SK-N-SH (cell line): ENCODE measurements at regions of chr7 and their contacts with region 1.

Region 1: GRCh38 chr7:28096713-28097112 is 83.9 kb downstream of the JAZF1 start:
- DNase-seq: peak; percentile 84
- H3K4me3 ChIP-seq: no peak overlapping the region
- H3K27ac ChIP-seq: no peak overlapping the region
- H3K4me1 ChIP-seq: no peaks in the 10 kb centered on the region
- H3K27me3 ChIP-seq: no peaks in the 10 kb centered on the region
- CTCF ChIP-seq: peak; percentile 99
- EP300 ChIP-seq: no peak
- RAD21 ChIP-seq: peak; percentile 98

Region 2: DNA sequence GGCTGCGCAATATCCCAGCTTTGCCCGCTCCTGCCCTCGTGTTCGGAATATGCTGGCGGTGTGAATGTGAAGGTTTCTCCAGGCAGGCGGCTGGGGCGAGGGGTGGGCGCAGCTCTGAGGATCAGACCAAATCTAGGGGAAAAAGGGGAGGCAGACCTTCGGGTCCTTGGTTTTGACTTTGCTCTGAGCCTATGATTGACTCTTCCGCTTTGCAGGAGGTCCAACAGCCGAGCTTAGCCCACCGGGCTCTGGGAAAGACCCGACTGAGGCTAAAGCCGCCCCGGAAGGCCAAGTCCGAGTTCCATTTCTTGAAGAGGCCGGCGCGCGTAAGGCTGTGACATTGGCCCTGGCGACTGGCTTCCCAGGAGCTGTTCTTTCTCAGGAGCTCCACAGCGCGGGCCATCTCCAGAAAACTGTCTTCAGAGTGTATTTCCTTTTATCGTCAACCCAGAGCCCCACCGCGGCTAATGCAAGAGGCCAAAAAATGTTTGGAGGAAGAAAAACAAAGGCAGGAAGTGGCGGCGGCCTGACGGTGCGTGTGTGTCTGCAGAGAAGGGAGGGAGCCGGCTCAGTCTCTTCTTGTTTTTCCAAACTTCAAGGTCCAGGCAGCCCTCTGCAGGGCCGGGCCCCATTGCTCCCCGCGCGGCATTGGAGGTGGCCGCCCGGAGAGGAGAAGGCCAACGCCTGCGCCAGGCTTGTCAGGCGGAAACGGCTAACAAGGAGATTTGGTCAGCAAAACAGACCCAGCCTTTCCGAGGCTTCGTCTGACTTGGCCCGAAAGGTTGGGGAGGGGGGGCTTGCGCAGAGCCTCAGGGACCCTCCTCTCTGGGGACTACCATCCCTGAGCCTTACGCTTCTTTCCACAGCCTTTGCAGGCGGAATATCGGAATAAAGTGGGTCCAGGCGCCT is 908.1 kb before region 1 on chr7:
- CTCF ChIA-PET with region 1: interaction called, 10 read pairs
- POLR2A ChIA-PET with region 1: no interaction called
- DNase-seq: no peak
- H3K4me3 ChIP-seq: no peak overlapping the region
- H3K27ac ChIP-seq: no peak overlapping the region
- H3K4me1 ChIP-seq: peaks cover 4 to 10% of the 10 kb centered on the region in 2 experiments; a peak in 1 of 4 replicates
- H3K27me3 ChIP-seq: peaks cover 98% of the 10 kb centered on the region
- CTCF ChIP-seq: no peak
- EP300 ChIP-seq: no peak
- RAD21 ChIP-seq: no peak

Region 3: GRCh38 chr7:27850531-27850930 is 246.2 kb before region 1 on chr7:
- CTCF ChIA-PET with region 1: no interaction called
- POLR2A ChIA-PET with region 1: no interaction called
- DNase-seq: no peak
- H3K4me3 ChIP-seq: no peak overlapping the region
- H3K27ac ChIP-seq: no peak overlapping the region
- H3K4me1 ChIP-seq: no peaks in the 10 kb centered on the region
- H3K27me3 ChIP-seq: no peaks in the 10 kb centered on the region
- CTCF ChIP-seq: no peak
- EP300 ChIP-seq: no peak
- RAD21 ChIP-seq: no peak

Region 4: DNA sequence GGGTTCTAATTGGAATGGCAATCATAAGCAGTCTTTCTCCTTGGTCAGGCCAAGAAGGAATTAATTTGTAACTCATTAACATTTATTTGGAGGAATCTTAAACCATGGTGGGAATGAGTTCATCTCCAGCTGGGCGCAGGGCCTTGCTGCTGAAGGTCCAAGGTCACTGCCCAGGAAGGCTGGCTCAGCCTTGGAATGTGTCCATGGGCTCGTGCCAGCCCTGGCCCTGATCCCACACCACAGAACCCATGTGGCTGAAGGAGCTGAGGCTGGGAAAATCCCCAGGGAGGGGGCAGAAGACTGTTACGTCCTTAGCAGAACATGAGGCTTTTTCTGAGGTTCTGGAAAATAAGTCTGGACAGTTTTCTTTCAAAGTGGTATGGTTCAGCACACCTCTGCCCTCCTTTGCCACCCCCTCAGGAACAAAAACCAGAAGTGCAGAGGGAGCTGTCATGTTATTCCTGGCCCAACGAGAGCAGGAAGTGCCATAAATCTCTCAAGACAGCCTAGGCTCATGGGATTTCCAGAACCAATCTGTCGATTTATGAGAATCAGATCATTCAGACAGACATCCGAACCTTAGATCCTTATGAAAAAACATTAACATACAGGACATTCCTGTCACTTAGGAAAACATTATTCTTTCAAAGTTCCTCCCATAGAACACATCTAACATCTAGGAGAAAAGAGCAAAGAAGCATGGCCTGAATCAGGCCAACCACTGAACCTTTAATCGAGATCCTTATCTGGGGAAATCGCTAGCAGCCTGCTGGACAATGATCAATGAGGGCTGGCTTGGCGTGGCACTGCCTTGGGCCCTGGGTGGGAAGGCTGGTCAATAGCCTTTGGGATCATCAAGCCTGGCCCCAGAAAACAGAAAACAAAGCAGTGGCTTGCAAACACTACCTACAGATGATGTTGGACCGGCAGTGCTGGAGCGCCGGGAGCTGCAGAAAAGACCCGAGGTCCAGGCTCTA is 222.4 kb before region 1 on chr7:
- CTCF ChIA-PET with region 1: no interaction called
- POLR2A ChIA-PET with region 1: no interaction called
- DNase-seq: no peak
- H3K4me3 ChIP-seq: no peak overlapping the region
- H3K27ac ChIP-seq: peak overlapping the region in 1 of 2 experiments; percentile 43; a peak in 2 of 4 replicates
- H3K4me1 ChIP-seq: peaks cover 7 to 10% of the 10 kb centered on the region in 2 experiments
- H3K27me3 ChIP-seq: no peaks in the 10 kb centered on the region
- CTCF ChIP-seq: no peak
- EP300 ChIP-seq: peak in 1 of 2 experiments; percentile 26; a peak in 1 of 4 replicates
- RAD21 ChIP-seq: no peak

Region 5: GRCh38 chr7:28062197-28062991 is 34.3 kb before region 1 on chr7:
- CTCF ChIA-PET with region 1: interaction called, 828 read pairs
- POLR2A ChIA-PET with region 1: interaction called, 5 read pairs
- DNase-seq: peak; percentile 62
- H3K4me3 ChIP-seq: no peak overlapping the region
- H3K27ac ChIP-seq: no peak overlapping the region
- H3K4me1 ChIP-seq: peaks cover 0 to 8% of the 10 kb centered on the region in 2 experiments; a peak in 2 of 4 replicates
- H3K27me3 ChIP-seq: no peaks in the 10 kb centered on the region
- CTCF ChIP-seq: peak; percentile 88
- EP300 ChIP-seq: no peak
- RAD21 ChIP-seq: peak; percentile 92

Region 6: DNA sequence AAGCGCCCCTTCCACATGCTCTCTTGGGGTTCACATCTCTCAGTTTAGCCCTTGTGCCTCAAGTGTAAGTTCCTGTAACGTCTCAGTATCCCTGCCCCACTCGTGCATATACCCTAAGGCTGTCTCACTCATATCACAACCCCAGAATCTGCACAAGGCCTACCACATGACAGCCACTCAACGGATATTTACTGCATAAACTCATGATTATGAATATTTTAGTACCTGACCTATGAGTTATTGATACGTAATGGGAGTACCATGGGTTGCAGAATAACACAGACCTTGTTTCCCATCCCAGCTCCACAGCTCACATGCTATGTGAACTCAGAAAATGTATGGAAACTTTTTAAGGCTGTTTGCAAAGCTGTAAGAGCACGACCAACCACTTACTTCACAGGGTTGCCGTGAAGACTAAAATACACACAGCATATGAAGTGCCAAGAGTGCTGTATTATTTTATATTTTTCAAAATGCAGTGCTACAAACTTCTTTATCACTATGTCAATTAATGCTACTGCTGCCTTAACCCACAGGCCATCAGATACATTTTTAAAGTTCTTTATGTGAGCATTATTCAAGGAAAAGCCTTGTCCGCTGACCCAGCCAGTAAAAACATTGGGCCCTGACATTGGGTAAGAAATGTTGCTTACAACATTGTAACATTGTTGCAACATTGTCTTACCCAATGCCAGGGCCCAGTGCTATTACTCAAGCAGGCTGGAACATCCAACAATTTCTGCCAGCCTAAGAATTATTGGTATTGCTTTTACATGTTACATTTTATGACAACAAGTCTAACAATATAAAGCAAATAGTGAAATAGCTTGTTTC is 13.3 kb before region 1 on chr7:
- CTCF ChIA-PET with region 1: interaction called, 828 read pairs
- POLR2A ChIA-PET with region 1: no interaction called
- DNase-seq: no peak
- H3K4me3 ChIP-seq: no peak overlapping the region
- H3K27ac ChIP-seq: no peak overlapping the region
- H3K4me1 ChIP-seq: peaks cover 0 to 8% of the 10 kb centered on the region in 2 experiments; a peak in 1 of 4 replicates
- H3K27me3 ChIP-seq: no peaks in the 10 kb centered on the region
- CTCF ChIP-seq: no peak
- EP300 ChIP-seq: no peak
- RAD21 ChIP-seq: no peak

Region 7: GRCh38 chr7:28112883-28113540 is 16.3 kb after region 1 on chr7:
- CTCF ChIA-PET with region 1: interaction called, 100 read pairs
- POLR2A ChIA-PET with region 1: no interaction called
- DNase-seq: peak; percentile 34
- H3K4me3 ChIP-seq: no peak overlapping the region
- H3K27ac ChIP-seq: peak overlapping the region in 1 of 2 experiments; percentile 82; a peak in 1 of 4 replicates
- H3K4me1 ChIP-seq: peaks cover 4 to 20% of the 10 kb centered on the region in 2 experiments; a peak in 2 of 4 replicates
- H3K27me3 ChIP-seq: no peaks in the 10 kb centered on the region
- CTCF ChIP-seq: no peak
- EP300 ChIP-seq: no peak
- RAD21 ChIP-seq: no peak

Region 8: DNA sequence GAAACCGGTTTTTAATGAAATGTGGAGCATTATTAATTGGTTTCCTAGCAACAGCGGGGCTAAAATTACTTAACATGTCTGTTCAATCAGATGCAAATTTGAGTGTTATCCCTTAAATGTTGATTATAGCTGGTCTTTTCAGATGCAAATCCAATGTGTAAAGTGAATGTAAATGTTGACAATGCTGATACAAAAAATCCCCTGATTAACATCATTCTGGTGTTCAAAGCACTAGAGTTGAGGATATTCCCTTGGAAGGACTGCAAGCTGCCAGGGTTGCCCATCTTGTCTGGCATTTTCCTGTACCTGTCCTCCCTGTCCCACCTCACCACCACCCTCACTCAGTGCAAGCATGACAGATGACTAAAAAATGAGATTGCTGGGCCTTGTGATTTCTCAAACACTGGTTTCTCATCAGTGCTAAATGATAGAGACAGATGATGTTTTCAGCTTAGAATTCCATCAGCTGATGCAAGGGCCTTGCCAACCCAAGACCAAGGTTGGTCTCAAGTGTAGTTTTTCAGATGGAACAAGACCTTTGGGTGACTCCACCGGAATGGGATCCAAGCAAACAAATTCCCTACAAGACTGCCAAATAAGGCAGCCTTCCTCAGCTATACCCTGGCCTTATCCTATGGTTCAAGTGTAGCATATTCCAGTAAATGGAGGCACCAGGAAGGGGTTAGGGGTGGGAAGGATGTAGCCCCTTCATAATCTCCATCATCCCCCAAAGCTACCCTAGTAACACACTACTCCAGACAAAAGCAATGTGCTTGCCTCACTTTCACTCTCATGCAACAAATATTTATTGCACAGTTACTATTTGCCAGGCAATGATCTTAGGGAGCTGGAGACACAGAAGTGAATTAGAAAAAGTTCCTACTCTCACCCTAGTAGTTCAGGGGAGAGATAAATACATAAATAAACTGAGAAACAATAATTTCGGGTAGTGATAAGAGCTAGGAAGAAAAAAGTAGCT is 29.0 kb after region 1 on chr7:
- CTCF ChIA-PET with region 1: interaction called, 28 read pairs
- POLR2A ChIA-PET with region 1: no interaction called
- DNase-seq: no peak
- H3K4me3 ChIP-seq: no peak overlapping the region
- H3K27ac ChIP-seq: no peak overlapping the region
- H3K4me1 ChIP-seq: peaks cover 0 to 5% of the 10 kb centered on the region in 2 experiments; a peak in 1 of 4 replicates
- H3K27me3 ChIP-seq: no peaks in the 10 kb centered on the region
- CTCF ChIP-seq: no peak
- EP300 ChIP-seq: no peak
- RAD21 ChIP-seq: no peak

Region 9: GRCh38 chr7:28132959-28133870 is 36.5 kb after region 1 on chr7:
- CTCF ChIA-PET with region 1: interaction called, 28 read pairs
- POLR2A ChIA-PET with region 1: no interaction called
- DNase-seq: peak; percentile 41
- H3K4me3 ChIP-seq: no peak overlapping the region
- H3K27ac ChIP-seq: peak overlapping the region in 1 of 2 experiments; percentile 89; a peak in 2 of 4 replicates
- H3K4me1 ChIP-seq: peaks cover 5 to 24% of the 10 kb centered on the region in 2 experiments; a peak in 2 of 4 replicates
- H3K27me3 ChIP-seq: no peaks in the 10 kb centered on the region
- CTCF ChIP-seq: no peak
- EP300 ChIP-seq: peak in 1 of 2 experiments; percentile 84; a peak in 2 of 4 replicates
- RAD21 ChIP-seq: no peak

Region 10: DNA sequence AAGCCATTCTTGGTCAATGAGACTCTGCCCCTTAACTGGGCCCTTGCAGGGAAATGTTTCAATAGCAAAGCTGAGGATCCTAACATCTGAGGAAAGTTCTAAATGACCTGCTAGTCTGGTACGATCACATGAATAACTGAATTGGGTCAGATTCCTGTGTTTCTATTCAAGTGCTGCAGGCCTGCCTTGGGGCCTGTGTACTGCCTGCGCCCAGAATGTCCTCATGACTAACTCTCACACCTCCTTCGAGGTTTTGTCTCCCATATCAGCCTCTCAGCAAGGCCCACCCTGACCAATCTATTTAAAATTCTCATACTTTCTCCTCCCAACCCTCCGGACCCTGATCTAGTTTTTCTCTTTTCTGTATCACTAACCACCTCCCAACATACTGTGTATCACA is 79.5 kb after region 1 on chr7:
- CTCF ChIA-PET with region 1: no interaction called
- POLR2A ChIA-PET with region 1: no interaction called
- DNase-seq: no peak
- H3K4me3 ChIP-seq: no peak overlapping the region
- H3K27ac ChIP-seq: no peak overlapping the region
- H3K4me1 ChIP-seq: peaks cover 7 to 8% of the 10 kb centered on the region in 2 experiments; a peak in 3 of 4 replicates
- H3K27me3 ChIP-seq: no peaks in the 10 kb centered on the region
- CTCF ChIP-seq: no peak
- EP300 ChIP-seq: no peak
- RAD21 ChIP-seq: no peak

Region 11: GRCh38 chr7:28239823-28240204 is 143.1 kb after region 1 on chr7:
- CTCF ChIA-PET with region 1: no interaction called
- POLR2A ChIA-PET with region 1: no interaction called
- DNase-seq: no peak
- H3K4me3 ChIP-seq: no peak overlapping the region
- H3K27ac ChIP-seq: no peak overlapping the region
- H3K4me1 ChIP-seq: no peaks in the 10 kb centered on the region
- H3K27me3 ChIP-seq: no peaks in the 10 kb centered on the region
- CTCF ChIP-seq: no peak
- EP300 ChIP-seq: no peak
- RAD21 ChIP-seq: no peak